Gastrocnemius medialis (tissue), 4 donors: ENCODE measurements at regions of chr4 and their contacts with region 1.

Region 1: GRCh38 chr4:110516106-110516922 is 40.4 kb downstream of the ENPEP start:
- DNase-seq: peak in 1 of 2 donors; percentile 53
- ATAC-seq: peak; percentile 68 to 88
- H3K4me3 ChIP-seq: peak overlapping the region; percentile 16 to 52 (median 28)
- H3K27ac ChIP-seq: peak overlapping the region in 1 of 4 donors; percentile 30
- H3K4me1 ChIP-seq: no peaks in the 10 kb centered on the region
- H3K27me3 ChIP-seq: no peaks in the 10 kb centered on the region
- CTCF ChIP-seq: peak; percentile 36 to 67 (median 57)
- POLR2A ChIP-seq: no peak

Region 2: GRCh38 chr4:110005461-110006056 is 510.8 kb before region 1 on chr4:
- in situ Hi-C with region 1: loop called in 2 of 4 experiments (anchors 5 to 10 kb)
- intact Hi-C with region 1: no loop called
- DNase-seq: no peak
- ATAC-seq: no peak
- H3K4me3 ChIP-seq: no peak overlapping the region
- H3K27ac ChIP-seq: no peak overlapping the region
- H3K4me1 ChIP-seq: no peaks in the 10 kb centered on the region
- H3K27me3 ChIP-seq: no peaks in the 10 kb centered on the region
- CTCF ChIP-seq: peak in 4 of 5 experiments; percentile 20 to 49 (median 32)
- POLR2A ChIP-seq: no peak

Region 3: GRCh38 chr4:110211007-110211769 is 305.1 kb before region 1 on chr4:
- in situ Hi-C with region 1: loop called in 1 of 4 experiments (anchors 25 kb)
- intact Hi-C with region 1: no loop called
- DNase-seq: no peak
- ATAC-seq: peak in 1 of 2 donors; percentile 30
- H3K4me3 ChIP-seq: no peak overlapping the region
- H3K27ac ChIP-seq: no peak overlapping the region
- H3K4me1 ChIP-seq: no peaks in the 10 kb centered on the region
- H3K27me3 ChIP-seq: no peaks in the 10 kb centered on the region
- CTCF ChIP-seq: peak in 4 of 5 experiments; percentile 21 to 66 (median 51)
- POLR2A ChIP-seq: no peak

Region 4: GRCh38 chr4:110344162-110344561 is 172.2 kb before region 1 on chr4:
- in situ Hi-C with region 1: loop called in 2 of 4 experiments (anchors 5 to 25 kb)
- intact Hi-C with region 1: loop called (anchors 2 kb)
- DNase-seq: no peak
- ATAC-seq: peak; percentile 33 to 46
- H3K4me3 ChIP-seq: no peak overlapping the region
- H3K27ac ChIP-seq: no peak overlapping the region
- H3K4me1 ChIP-seq: no peaks in the 10 kb centered on the region
- H3K27me3 ChIP-seq: no peaks in the 10 kb centered on the region
- CTCF ChIP-seq: peak in 3 of 5 experiments; percentile 33 to 40 (median 40)
- POLR2A ChIP-seq: no peak

Region 5: GRCh38 chr4:110678517-110679227 is 162.4 kb after region 1 on chr4:
- in situ Hi-C with region 1: no loop called
- intact Hi-C with region 1: no loop called
- DNase-seq: no peak
- ATAC-seq: no peak
- H3K4me3 ChIP-seq: no peak overlapping the region
- H3K27ac ChIP-seq: no peak overlapping the region
- H3K4me1 ChIP-seq: no peaks in the 10 kb centered on the region
- H3K27me3 ChIP-seq: no peaks in the 10 kb centered on the region
- CTCF ChIP-seq: no peak
- POLR2A ChIP-seq: no peak